Activated CD4-positive, alpha-beta memory T cell treated with anti-CD3 and anti-CD28 coated beads for 36 hours (primary cell): ENCODE measurements at regions of chr11 and their contacts with region 1.

Region 1: GRCh38 chr11:31240338-31240904 is 129.1 kb downstream of the DCDC1 start:
- DNase-seq: peak; percentile 10
- H3K4me3 Mint-ChIP-seq: no peak overlapping the region
- H3K27ac Mint-ChIP-seq: no peak overlapping the region
- H3K4me1 Mint-ChIP-seq: no peaks in the 10 kb centered on the region
- H3K27me3 Mint-ChIP-seq: no peaks in the 10 kb centered on the region

Region 2: GRCh38 chr11:31254431-31254830 is 14.0 kb after region 1 on chr11:
- CTCF ChIA-PET with region 1: no interaction called
- POLR2A ChIA-PET with region 1: no interaction called
- intact Hi-C with region 1: no loop called
- DNase-seq: no peak
- H3K4me3 Mint-ChIP-seq: no peak overlapping the region
- H3K27ac Mint-ChIP-seq: no peak overlapping the region
- H3K4me1 Mint-ChIP-seq: no peaks in the 10 kb centered on the region
- H3K27me3 Mint-ChIP-seq: no peaks in the 10 kb centered on the region

Region 3: GRCh38 chr11:31870609-31871309 is 630.3 kb after region 1 on chr11:
- CTCF ChIA-PET with region 1: interaction called, 6 read pairs
- POLR2A ChIA-PET with region 1: no interaction called
- intact Hi-C with region 1: loop called (anchors 5 kb)
- DNase-seq: peak; percentile 40
- H3K4me3 Mint-ChIP-seq: no peak overlapping the region
- H3K27ac Mint-ChIP-seq: no peak overlapping the region
- H3K4me1 Mint-ChIP-seq: no peaks in the 10 kb centered on the region
- H3K27me3 Mint-ChIP-seq: peaks cover 19% of the 10 kb centered on the region